Ovary (tissue), 10 donors: ENCODE measurements at regions of chr14 and their contacts with region 1.

Region 1: DNA sequence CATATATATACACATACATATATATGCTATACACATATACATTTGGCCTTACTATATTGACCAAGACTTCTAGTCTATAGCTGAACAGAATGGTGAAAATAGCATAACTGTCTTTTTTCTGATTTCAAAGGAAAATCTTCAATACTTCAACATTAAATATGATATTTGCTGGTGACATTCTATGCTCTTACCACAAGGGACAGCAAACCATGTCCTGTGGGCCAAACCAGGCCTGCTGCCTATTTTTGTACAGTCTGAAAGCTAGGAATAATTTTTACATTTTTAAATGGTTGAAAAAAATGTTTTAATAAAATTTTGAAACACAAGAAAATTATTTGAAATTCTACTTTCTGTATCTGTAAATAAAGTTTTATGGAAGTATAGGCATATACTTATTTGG is 63.6 kb downstream of the EML5 start:
- DNase-seq: no peak
- H3K4me3 ChIP-seq: no peak overlapping the region
- H3K27ac ChIP-seq: no peak overlapping the region
- H3K4me1 ChIP-seq: no peaks in the 10 kb centered on the region
- H3K27me3 ChIP-seq: no peaks in the 10 kb centered on the region
- CTCF ChIP-seq: no peak
- EP300 ChIP-seq: no peak
- POLR2A ChIP-seq: no peak

Region 2: GRCh38 chr14:87170179-87170578 is 1559.0 kb before region 1 on chr14:
- intact Hi-C with region 1: loop called in 1 of 4 experiments (anchors 5 kb)
- DNase-seq: no peak
- H3K4me3 ChIP-seq: no peak overlapping the region
- H3K27ac ChIP-seq: no peak overlapping the region
- H3K4me1 ChIP-seq: no peaks in the 10 kb centered on the region
- H3K27me3 ChIP-seq: no peaks in the 10 kb centered on the region
- CTCF ChIP-seq: no peak
- EP300 ChIP-seq: no peak
- POLR2A ChIP-seq: no peak

Region 3: DNA sequence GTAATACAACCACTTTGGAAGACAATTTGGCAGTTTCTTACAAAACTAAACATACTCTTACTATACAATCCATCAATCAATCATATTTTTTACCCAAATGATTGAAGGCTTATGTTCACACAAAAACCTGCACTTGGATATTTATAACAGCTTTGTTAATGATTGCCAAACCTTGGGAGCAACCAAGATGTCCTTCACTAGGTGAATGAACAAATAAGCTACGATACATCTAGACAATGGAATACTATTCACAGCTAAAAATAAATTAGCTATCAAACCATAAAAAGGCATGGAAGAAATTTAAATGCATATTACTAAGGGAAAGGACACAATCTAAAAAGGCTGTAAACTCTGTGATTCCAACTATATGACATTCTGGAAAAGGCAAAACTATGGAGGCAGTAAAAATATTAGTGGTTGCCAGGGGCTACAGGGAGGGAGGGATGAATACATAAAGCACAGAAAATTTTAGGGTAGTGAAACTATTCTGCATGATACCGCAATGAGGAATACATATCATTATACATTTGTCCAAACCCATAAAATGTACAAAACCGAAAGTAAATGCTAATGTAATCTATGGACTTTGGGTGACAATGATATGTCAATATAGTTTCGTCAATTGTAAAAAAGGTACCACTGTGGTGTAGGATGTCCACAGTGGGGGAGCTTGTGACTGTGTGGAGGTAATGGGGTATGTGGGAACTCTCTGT is 653.7 kb before region 1 on chr14:
- intact Hi-C with region 1: no loop called
- DNase-seq: no peak
- H3K4me3 ChIP-seq: no peak overlapping the region
- H3K27ac ChIP-seq: no peak overlapping the region
- H3K4me1 ChIP-seq: no peaks in the 10 kb centered on the region
- H3K27me3 ChIP-seq: no peaks in the 10 kb centered on the region
- CTCF ChIP-seq: no peak
- EP300 ChIP-seq: no peak
- POLR2A ChIP-seq: no peak